Aorta (tissue), 5 donors: ENCODE measurements at regions of chr19 and their contacts with region 1.

Region 1: GRCh38 chr19:29714953-29715700 is at the start of gene C19orf12:
- DNase-seq: peak; percentile 70 to 89
- ATAC-seq: peak; percentile 90
- H3K4me3 ChIP-seq: peak within 1 kb of the TSS; percentile 57 to 83
- H3K27ac ChIP-seq: peak within 1 kb of the TSS; percentile 61 to 69
- H3K4me1 ChIP-seq: no peaks in the 10 kb centered on the region
- H3K27me3 ChIP-seq: no peaks in the 10 kb centered on the region
- total RNA-seq, gene C19orf12: 26.4 to 32.8 TPM

Region 2: DNA sequence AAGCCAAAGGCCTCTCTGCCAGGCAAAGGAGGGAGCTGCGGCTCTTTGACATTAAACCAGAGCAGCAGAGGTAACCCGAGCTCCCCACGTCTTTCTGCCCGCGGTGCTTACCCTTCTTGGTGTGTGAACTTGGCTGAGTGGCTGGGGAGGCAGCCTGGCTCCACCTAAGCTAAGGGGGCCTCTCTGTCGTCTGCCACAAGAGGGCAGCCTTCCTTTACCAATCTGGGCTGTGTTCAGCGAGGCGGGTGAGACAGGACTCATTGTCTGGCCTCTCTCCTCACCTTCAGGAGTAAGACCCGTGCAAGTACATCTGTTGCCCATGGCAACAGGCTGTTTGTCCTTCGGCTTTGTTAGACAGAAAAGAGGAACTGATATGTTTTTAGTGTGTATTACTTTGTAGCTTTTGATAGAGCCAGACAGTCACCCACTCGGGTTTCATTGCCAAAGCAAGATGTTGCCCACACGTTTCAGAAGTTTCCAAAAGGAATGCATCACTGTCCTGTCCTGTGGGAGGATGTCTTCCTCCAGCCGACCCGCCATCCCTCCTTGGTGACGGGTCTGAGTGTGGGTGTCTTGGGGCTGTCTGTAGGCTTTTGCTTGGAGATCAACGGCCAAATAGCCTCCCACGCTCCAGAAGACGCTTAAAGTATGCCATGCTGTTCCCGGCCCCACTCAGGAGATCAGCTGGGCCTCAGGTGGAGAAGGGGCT is 104.4 kb before region 1 on chr19:
- intact Hi-C with region 1: loop called (anchors 1 to 2 kb)
- DNase-seq: peak; percentile 87 to 91
- ATAC-seq: peak; percentile 88
- H3K4me3 ChIP-seq: no peak overlapping the region
- H3K27ac ChIP-seq: no peak overlapping the region
- H3K4me1 ChIP-seq: no peaks in the 10 kb centered on the region
- H3K27me3 ChIP-seq: no peaks in the 10 kb centered on the region

Region 3: GRCh38 chr19:29665215-29665825 is 49.8 kb before region 1 on chr19 and contains the start of gene PLEKHF1:
- intact Hi-C with region 1: loop called in 1 of 2 experiments (anchors 5 kb)
- DNase-seq: peak; percentile 94 to 96
- ATAC-seq: peak; percentile 93
- H3K4me3 ChIP-seq: peak within 1 kb of the TSS; percentile 57 to 80
- H3K27ac ChIP-seq: peak within 1 kb of the TSS; percentile 60 to 92
- H3K4me1 ChIP-seq: peaks cover 0 to 2% of the 10 kb centered on the region in 2 donors
- H3K27me3 ChIP-seq: no peaks in the 10 kb centered on the region
- total RNA-seq, gene PLEKHF1: 10.8 to 17.5 TPM

Region 4: GRCh38 chr19:29694669-29695627 is 20.2 kb before region 1 on chr19:
- intact Hi-C with region 1: loop called in 1 of 2 experiments (anchors 1 kb)
- DNase-seq: peak; percentile 86 to 94
- ATAC-seq: peak; percentile 93
- H3K4me3 ChIP-seq: no peak overlapping the region
- H3K27ac ChIP-seq: no peak overlapping the region
- H3K4me1 ChIP-seq: no peaks in the 10 kb centered on the region
- H3K27me3 ChIP-seq: no peaks in the 10 kb centered on the region

Region 5: GRCh38 chr19:29771708-29772414 is 56.7 kb after region 1 on chr19:
- intact Hi-C with region 1: no loop called
- DNase-seq: no peak
- ATAC-seq: no peak
- H3K4me3 ChIP-seq: no peak overlapping the region
- H3K27ac ChIP-seq: no peak overlapping the region
- H3K4me1 ChIP-seq: no peaks in the 10 kb centered on the region
- H3K27me3 ChIP-seq: no peaks in the 10 kb centered on the region